ENCODE measurements at regions of chr4 and their contacts with region 1.

Region 1: GRCh38 chr4:139015269-139015947 is at the start of gene NOCT:
- DNase-seq: peak; percentile 95
- ATAC-seq: peak; percentile 96
- total RNA-seq, gene NOCT: 8.5 TPM

Region 2: DNA sequence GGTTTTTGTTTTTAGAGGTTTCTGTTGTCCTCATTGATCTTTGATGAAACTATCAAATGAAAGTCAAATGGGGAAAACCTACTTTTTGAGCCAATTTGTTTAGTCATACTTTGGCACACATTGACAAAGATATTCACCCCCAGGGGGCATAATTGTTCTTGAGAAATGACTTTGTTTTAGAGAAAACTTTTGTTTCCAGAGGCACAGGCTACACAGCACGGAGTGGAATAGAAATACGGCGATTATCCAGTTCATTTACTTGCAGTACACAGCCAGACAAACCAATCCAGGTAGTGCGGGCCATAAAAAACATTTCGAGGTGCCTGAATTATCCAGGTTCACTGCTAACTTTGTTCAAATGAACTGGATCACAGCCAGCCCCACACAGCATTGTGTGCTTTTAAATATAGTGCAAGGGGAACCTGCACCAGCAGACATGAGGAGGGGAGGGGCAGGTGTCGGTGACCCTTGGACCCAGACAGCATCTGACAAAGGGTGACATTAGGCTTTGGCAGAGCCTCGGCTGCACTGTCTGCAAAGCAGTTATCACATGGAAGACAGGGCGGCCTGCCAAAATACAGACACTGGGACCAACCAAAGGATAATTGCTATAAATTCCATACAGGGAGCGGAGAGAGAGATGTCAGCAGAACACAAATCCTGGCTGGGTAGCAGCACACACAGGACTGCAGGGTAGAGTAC is 179.4 kb before region 1 on chr4:
- intact Hi-C with region 1: no loop called
- DNase-seq: peak; percentile 75
- ATAC-seq: peak; percentile 88

Region 3: DNA sequence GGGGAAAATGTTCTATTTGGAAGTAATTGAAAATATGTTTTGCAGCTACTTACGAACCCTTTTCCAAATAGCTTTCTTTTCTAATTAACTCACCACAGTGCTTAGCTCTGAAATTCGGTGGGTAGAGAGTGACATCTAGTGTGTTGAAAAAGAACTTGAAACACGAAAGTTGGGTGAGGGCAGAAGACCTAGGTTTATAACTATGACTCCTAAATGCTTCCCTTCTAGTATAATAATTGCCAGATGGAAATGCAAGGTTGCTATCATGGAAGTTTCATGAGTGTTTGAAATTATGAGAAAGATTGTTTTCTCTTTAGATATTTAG is 77.1 kb before region 1 on chr4:
- intact Hi-C with region 1: loop called (anchors 1 kb)
- DNase-seq: no peak
- ATAC-seq: peak; percentile 60

Region 4: GRCh38 chr4:138967313-138967712 is 48.1 kb before region 1 on chr4:
- intact Hi-C with region 1: no loop called
- DNase-seq: no peak
- ATAC-seq: no peak

Region 5: GRCh38 chr4:138981930-138982390 is 33.4 kb before region 1 on chr4:
- intact Hi-C with region 1: loop called (anchors 2 kb)
- DNase-seq: no peak
- ATAC-seq: peak; percentile 94

Region 6: DNA sequence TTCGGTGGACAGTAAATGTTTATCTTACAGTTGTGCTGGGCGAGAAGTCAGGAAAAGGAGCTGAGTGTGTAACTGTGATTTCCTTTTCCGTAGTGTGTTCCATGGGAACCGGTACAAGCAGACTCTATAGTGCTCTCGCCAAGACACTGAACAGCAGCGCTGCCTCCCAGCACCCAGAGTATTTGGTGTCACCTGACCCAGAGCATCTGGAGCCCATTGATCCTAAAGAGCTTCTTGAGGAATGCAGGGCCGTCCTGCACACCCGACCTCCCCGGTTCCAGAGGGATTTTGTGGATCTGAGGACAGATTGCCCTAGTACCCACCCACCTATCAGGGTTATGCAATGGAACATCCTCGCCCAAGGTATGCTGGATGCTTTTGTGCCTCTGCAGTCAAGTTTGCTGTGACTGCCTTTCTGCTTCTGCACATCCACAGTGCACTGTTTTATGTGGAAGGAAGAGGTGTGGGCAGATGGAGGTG is 27.6 kb after region 1 on chr4:
- intact Hi-C with region 1: no loop called
- DNase-seq: no peak
- ATAC-seq: peak; percentile 31

Region 7: GRCh38 chr4:139083956-139084803 is 68.8 kb after region 1 on chr4:
- intact Hi-C with region 1: no loop called
- DNase-seq: peak; percentile 94
- ATAC-seq: peak; percentile 81